Natural killer cell (primary cell): ENCODE measurements at regions of chr19 and their contacts with region 1.

Region 1: DNA sequence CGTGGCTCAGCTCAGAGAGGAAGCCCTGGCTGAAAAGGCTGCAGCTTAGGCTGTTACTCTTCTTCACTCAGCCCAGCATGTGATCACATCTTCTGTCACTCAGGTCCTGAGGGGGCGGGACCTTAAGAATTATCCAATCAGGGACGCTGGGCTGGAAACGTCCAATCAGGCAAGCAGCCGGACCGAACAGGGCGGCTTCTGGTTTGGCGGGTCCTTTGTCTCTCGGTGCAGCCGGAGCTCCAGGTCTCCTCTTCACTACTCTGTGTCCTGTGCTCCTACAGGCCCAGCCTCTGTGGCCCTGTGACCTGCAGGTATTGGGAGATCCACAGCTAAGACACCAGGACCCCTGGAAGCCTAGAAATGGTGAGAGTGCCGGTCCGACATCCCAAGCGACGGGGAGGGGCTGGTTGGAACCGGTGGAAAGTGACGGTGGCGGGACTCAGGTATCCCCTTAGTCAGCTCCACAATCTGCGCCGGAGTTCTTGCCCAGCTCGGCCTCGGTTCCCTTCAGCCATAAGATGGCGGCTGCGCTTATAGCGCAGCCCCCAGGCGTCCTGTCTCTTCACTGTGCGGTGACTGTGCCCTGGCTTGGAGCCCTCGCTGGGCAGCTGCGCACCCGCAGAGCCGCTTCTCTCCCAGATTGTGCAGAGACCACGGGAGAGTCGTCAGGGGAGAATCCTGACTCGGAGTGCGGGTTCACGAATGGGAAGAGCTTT is at the start of gene ZNF93:
- DNase-seq: peak; percentile 89 to 95
- ATAC-seq: peak; percentile 96 to 99 (median 99)
- H3K4me3 ChIP-seq: peak within 1 kb of the TSS; percentile 88
- H3K4me3 Mint-ChIP-seq: peak within 1 kb of the TSS; percentile 99
- H3K27ac ChIP-seq: peak within 1 kb of the TSS; percentile 73
- H3K27ac Mint-ChIP-seq: peak within 1 kb of the TSS; percentile 92 to 96
- H3K4me1 ChIP-seq: peaks cover 14% of the 10 kb centered on the region
- H3K4me1 Mint-ChIP-seq: peaks cover 20 to 32% of the 10 kb centered on the region in 2 donors
- H3K27me3 ChIP-seq: no peaks in the 10 kb centered on the region
- H3K27me3 Mint-ChIP-seq: no peaks in the 10 kb centered on the region
- CTCF ChIP-seq: no peak
- total RNA-seq, gene ZNF93: 2.2 to 5.2 (median 4.2) TPM

Region 2: DNA sequence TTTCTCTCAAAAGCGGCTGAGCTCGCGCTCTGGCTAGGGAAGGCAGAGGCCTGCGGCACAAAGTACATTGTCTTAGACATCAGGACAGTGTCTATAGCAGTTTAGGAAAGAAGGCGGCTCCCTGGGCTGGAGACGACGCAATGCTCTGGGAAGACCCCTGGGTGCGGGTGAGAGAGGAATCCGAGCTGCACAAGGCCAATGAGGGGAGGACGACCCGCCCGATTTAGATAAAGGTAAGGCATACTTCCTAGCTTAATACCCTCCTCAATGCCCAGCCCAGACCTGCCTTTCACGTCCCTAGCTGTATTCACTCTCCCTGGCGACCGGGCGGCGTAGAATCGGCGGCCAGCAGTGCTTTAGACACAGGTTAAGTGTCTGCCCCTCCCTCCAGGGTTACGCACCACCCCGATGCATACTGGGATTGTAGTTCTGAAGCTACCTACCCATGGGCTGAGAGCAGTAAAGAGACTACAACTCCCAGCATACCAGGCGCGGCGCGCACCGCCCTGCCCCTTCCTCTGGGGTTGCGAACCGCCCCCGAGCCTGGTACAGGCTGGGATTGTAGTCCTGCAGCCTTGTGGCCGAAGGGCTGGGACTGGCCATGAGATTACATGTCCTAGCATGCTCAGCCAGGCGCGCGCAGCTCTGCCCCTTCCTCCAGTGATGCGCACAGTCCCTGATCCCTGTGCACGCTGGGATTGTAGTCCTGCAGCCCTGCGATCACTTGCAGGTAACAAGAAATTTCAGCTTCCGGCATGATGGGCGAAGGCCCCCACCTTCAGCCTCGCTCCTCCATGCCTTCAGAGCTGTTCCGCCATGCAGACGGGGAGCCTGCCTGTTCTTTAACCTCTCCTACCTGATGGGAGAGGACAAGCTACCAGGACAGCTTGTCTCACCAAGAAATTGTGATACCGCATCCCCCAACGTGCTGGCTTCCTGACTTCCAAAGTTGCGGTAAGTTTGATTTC is 124.6 kb before region 1 on chr19:
- intact Hi-C with region 1: loop called (anchors 1 kb)
- DNase-seq: peak; percentile 86 to 95
- ATAC-seq: peak; percentile 99 to 100 (median 99)
- H3K4me3 ChIP-seq: peak overlapping the region; percentile 53
- H3K4me3 Mint-ChIP-seq: peak overlapping the region; percentile 93
- H3K27ac ChIP-seq: peak overlapping the region; percentile 58
- H3K27ac Mint-ChIP-seq: peak overlapping the region; percentile 89 to 94
- H3K4me1 ChIP-seq: peaks cover 15% of the 10 kb centered on the region
- H3K4me1 Mint-ChIP-seq: peaks cover 20 to 35% of the 10 kb centered on the region in 2 donors
- H3K27me3 ChIP-seq: no peaks in the 10 kb centered on the region
- H3K27me3 Mint-ChIP-seq: no peaks in the 10 kb centered on the region
- CTCF ChIP-seq: no peak

Region 3: DNA sequence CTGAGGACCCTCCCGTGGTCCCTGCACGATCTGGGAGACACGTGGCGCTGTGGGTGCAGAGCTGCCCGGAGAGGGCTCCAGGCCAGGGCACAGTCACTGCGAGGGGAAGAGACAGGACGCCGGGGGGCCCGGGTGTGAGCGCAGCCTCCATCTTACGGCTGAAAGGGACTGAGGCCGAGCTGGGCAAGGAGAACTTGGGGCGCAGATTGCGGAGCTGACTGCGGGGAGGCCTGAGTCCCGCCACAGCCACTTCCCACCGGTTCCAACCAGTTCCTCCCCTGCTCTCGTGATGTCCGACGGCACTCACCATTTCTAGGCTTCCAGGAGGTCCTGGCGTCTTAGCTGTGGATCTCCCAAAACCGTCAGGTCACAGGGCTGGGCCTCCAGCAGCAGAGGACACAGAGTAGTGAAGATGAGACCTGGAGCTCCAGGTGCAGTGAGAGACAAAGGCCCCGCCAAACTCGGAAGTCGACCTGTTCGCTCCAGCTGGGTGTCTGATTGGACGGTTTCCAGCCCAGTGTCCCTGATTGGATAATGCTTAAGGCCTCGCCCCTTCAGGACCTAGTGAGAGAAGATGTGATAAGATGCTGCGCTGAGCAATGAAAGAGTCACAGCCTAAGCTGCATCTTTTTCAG is 40.0 kb before region 1 on chr19:
- intact Hi-C with region 1: no loop called
- DNase-seq: peak; percentile 30 to 69
- ATAC-seq: peak; percentile 30 to 74 (median 42)
- H3K4me3 ChIP-seq: peak overlapping the region; percentile 53
- H3K4me3 Mint-ChIP-seq: peak overlapping the region; percentile 94
- H3K27ac ChIP-seq: peak overlapping the region; percentile 24
- H3K27ac Mint-ChIP-seq: peak overlapping the region; percentile 75 to 83
- H3K4me1 ChIP-seq: peaks cover 9% of the 10 kb centered on the region
- H3K4me1 Mint-ChIP-seq: peaks cover 18 to 22% of the 10 kb centered on the region in 2 donors
- H3K27me3 ChIP-seq: no peaks in the 10 kb centered on the region
- H3K27me3 Mint-ChIP-seq: peaks cover 0 to 8% of the 10 kb centered on the region in 2 donors
- CTCF ChIP-seq: no peak